K562 (cell line): ENCODE measurements at regions of chr9 and their contacts with region 1.

Region 1: DNA sequence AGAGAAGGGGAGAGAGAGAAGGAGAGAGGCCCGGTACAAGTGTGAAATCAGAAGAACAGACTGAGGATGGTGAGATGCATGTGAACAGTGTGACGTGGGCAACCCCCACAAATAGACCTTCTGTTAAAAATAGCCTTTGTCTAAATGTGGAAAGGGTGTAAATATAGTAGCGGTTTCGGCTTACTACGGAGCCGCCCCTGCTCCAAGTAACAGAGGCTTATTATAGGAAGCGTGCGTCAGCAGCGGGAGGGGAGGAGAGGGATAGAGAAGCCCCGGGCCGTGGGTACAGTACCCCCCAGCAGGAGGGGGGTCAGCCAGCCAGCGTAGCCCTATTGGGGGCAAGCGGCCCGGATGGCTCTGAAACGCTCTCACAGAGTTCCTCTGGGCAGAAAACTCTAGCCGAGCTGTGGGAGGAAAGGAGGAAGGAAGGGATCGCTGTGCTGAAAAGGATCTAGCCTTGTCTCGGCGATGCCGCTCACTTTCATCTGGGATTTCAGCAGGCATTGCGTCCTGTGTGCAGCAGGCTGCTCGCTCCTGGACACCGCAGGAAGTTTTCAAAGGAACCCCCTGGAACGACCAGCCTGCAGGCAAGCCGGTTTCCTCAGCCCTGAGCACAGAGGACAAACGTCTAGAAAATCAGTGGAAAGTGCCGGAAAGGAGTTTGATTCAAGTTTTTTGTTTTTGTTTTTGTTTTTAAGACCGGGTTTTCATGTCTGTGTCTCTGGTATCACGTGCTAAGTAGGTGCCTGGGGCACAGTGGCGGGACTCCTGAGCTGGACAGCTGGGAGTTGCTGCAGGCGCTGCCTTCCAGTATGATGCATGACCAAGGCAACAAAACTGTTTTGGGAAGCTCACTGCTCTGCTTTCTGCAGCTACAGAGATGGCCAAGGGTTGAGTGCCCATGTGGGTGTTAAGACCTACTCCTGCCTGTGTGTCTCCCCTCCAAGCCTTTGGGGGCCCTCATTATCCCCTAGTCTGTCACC is 146.6 kb downstream of the SEC61B start:
- DNase-seq: no peak
- ATAC-seq: no peak
- H3K4me3 ChIP-seq: no peak overlapping the region
- H3K27ac ChIP-seq: no peak overlapping the region
- H3K4me1 ChIP-seq: no peaks in the 10 kb centered on the region
- H3K27me3 ChIP-seq: peaks cover 17 to 53% of the 10 kb centered on the region in 2 experiments
- CTCF ChIP-seq: no peak
- EP300 ChIP-seq: no peak
- POLR2A ChIP-seq: no peak
- RAD21 ChIP-seq: no peak

Region 2: DNA sequence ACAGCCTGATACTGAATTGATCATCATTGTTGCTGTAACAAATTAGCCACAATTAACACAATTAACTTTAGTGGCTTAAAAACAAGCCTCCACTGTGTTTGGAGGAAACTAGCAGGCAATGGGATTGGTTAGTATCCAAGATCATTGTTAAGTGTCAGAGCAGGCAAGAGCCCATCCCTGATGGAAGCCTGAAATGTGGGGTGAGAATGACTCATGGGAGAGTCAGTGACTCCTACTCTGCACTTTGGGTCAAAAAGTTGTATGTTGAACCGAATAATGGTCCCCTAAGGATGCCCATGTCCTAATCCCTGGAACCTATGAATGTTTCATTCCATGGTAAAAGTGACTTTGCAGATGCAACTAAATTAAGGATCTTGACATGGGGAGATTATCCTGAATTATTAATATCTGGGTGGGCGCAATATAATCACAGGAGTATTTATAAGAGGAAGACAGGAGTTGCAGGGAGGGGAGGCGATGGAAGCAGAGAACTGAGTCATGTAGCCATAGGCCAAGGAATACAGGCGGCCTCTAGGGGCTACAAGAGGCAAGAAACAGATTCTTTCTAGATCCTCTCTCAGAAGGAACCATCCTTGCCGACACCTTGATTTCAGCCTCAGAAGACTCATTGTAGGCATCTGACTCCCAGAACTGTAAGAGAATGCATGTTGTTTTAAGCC is 175.7 kb before region 1 on chr9:
- CTCF ChIA-PET with region 1: no interaction called
- POLR2A ChIA-PET with region 1: no interaction called
- in situ Hi-C with region 1: loop called (anchors 10 kb)
- intact Hi-C with region 1: no loop called
- DNase-seq: peak in 1 of 4 experiments; percentile 32
- ATAC-seq: peak; percentile 87
- H3K4me3 ChIP-seq: no peak overlapping the region
- H3K27ac ChIP-seq: no peak overlapping the region
- H3K4me1 ChIP-seq: no peaks in the 10 kb centered on the region; a peak in 1 of 5 replicates
- H3K27me3 ChIP-seq: peaks cover 45 to 50% of the 10 kb centered on the region in 2 experiments
- CTCF ChIP-seq: peak in 2 of 3 experiments; percentile 25 to 33; a peak in 3 of 6 replicates
- EP300 ChIP-seq: no peak
- POLR2A ChIP-seq: no peak
- RAD21 ChIP-seq: no peak

Region 3: GRCh38 chr9:99322294-99322693 is 46.3 kb before region 1 on chr9:
- CTCF ChIA-PET with region 1: no interaction called
- POLR2A ChIA-PET with region 1: no interaction called
- in situ Hi-C with region 1: no loop called
- intact Hi-C with region 1: no loop called
- DNase-seq: no peak
- ATAC-seq: no peak
- H3K4me3 ChIP-seq: no peak overlapping the region
- H3K27ac ChIP-seq: no peak overlapping the region
- H3K4me1 ChIP-seq: no peaks in the 10 kb centered on the region
- H3K27me3 ChIP-seq: peaks cover 9 to 16% of the 10 kb centered on the region in 2 experiments; a peak in 2 of 5 replicates
- CTCF ChIP-seq: no peak
- EP300 ChIP-seq: no peak
- POLR2A ChIP-seq: no peak
- RAD21 ChIP-seq: no peak